ENCODE measurements at regions of chr1 and their contacts with region 1.

Region 1: GRCh38 chr1:41268154-41268770 is 26.2 kb upstream of the SCMH1 start:
- DNase-seq: no peak
- H3K4me3 ChIP-seq: no peak overlapping the region
- H3K27ac ChIP-seq: no peak overlapping the region
- H3K4me1 ChIP-seq: peaks cover 0 to 6% (median 3%) of the 10 kb centered on the region in 4 donors
- H3K27me3 ChIP-seq: no peaks in the 10 kb centered on the region
- CTCF ChIP-seq: peak; percentile 99 to 100 (median 99)
- EP300 ChIP-seq: no peak
- POLR2A ChIP-seq: no peak

Region 2: DNA sequence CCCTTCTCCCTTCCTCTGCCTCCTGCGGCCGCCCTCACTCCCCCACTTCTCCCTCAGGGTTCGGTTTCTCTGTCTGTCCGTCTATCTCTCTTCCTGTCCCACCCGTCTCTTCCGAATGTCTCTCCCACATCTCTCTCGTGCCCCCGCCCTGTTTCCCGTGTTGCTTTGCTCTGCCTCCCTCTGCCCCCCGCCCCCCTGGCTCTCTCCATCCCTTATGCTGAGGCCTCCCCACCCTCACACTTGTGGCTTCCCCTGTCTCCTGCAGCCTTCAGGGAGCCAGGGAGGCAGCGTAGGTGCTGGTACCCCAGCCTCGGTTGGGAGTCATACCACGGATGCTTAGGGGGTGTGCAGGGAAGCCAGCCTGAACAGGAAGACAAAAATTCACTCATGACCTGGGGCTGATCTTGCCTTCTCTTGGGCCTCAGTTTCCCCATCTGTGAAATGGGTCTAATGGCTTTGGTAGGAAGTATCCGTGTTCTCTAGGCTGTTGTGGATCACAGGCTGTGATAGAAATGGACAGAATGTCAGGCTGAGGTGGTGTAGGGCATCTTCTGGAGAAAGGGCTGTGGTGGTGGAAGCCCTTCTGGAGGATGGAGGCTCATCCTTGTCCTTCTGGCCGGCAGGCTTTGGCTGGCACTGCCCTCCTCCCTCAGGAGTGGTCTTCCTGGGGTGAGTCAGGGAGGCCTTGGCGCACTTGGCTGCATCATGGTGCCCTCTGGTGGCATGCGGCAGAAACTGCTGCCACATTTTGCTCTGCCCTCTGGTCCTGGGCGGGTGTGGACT is 148.5 kb after region 1 on chr1:
- intact Hi-C with region 1: loop called (anchors 1 kb)
- DNase-seq: no peak
- H3K4me3 ChIP-seq: no peak overlapping the region
- H3K27ac ChIP-seq: no peak overlapping the region
- H3K4me1 ChIP-seq: peaks cover 11 to 27% (median 12%) of the 10 kb centered on the region in 4 donors
- H3K27me3 ChIP-seq: no peaks in the 10 kb centered on the region
- CTCF ChIP-seq: peak; percentile 88 to 97 (median 93)
- EP300 ChIP-seq: no peak
- POLR2A ChIP-seq: no peak

Region 3: DNA sequence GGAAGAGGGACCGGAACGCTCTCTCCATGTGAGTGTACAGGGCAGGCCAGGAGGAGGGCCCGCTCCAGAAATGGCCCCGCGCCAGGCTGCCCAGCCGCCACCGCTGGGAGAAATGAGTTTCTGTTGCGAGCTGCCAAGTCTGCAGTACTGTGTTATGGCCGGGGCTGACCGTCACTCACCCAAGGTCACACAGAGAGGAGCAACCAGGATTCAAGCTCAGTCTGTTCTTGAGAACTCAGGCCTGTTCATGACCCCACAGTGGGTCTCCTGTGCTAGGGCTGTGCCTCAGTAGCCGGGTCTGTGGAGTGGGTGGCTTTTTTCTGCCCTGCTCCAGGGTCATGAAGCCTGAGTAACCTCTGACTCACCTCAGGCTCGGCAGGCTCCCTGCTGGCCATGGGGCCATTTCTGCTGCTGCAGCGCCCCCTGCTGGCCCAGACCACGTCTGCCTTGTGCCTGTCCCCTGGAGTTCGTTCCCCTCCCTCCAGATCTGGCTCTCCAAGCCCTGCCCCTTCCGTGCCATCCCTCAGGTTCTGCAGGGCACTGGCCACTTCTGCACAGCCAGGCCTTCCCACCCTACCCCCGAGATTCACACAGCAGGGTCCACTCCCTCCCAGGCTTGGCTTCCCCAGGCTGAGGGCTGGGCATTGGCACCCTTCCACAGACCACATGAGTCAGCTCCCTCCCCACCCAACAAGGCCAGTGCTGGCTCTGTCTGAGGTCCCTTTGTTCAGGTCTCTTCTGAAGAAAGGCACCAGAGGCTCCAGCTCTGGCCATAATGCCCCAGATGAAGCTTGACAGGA is 164.4 kb after region 1 on chr1:
- intact Hi-C with region 1: loop called (anchors 5 kb)
- DNase-seq: peak; percentile 93
- H3K4me3 ChIP-seq: peak overlapping the region in 1 of 4 donors; percentile 0
- H3K27ac ChIP-seq: peak overlapping the region; percentile 53 to 67 (median 66)
- H3K4me1 ChIP-seq: peaks cover 24 to 45% (median 44%) of the 10 kb centered on the region in 4 donors
- H3K27me3 ChIP-seq: peaks cover 0 to 5% (median 0%) of the 10 kb centered on the region in 4 donors
- CTCF ChIP-seq: peak; percentile 70 to 84 (median 82)
- EP300 ChIP-seq: no peak
- POLR2A ChIP-seq: no peak

Region 4: DNA sequence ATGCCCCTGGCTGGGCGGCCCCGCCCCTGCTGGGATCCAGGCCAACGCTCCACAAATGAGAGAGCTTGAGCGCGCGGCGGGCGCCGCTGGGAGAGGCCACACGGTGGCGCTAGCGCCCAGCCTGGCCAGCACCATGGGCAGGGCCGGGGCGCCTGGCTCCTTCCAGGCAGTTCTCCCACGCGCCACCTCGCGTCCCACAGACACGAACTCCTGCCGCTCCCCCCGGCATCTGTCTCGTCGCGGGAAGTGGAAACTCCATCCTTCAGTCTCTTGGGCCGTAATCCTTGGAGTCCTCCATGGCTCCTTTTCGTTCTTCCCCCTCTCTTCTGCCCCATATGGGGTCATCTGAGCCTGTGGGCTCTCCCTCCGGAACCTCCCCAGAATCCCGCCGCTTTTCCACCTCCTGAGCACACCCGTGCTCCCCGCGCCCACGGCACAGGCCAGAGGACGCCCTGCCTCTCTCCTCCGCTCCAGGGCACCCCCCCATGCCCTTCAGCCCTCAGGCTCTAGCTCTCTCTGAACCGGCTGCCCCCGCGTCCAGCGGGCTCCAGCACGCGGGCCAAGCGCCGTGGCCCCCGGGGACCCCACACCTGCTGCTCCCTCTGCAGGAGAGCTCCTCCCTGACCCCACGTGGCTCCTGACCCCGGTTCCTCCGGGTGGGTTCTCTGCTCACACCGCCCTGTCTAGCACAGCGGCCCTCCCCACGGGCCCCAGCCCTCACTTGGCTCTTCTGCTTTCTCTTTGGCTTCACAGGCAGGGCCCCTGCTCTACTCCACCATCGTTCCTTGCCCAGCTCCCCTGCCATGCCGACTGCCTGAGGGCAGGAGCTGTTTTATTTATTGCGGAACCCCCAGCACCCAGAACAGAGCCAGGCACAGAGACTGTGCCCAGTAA is 248.2 kb after region 1 on chr1:
- intact Hi-C with region 1: loop called (anchors 5 kb)
- DNase-seq: peak; percentile 96
- H3K4me3 ChIP-seq: peak overlapping the region; percentile 54 to 60 (median 56)
- H3K27ac ChIP-seq: peak overlapping the region in 3 of 4 donors; percentile 13 to 61 (median 33)
- H3K4me1 ChIP-seq: peaks cover 18 to 23% (median 21%) of the 10 kb centered on the region in 4 donors
- H3K27me3 ChIP-seq: no peaks in the 10 kb centered on the region
- CTCF ChIP-seq: peak; percentile 89 to 90 (median 89)
- EP300 ChIP-seq: no peak
- POLR2A ChIP-seq: no peak